Activated B cell treated with CpG ODN at 0.5 μM for 24 hours (primary cell): ENCODE measurements at regions of chr2 and their contacts with region 1.

Region 1: GRCh38 chr2:104872866-104873688 is 19.2 kb downstream of the POU3F3 start:
- DNase-seq: peak; percentile 50
- ATAC-seq: peak; percentile 89
- H3K4me3 Mint-ChIP-seq: peak overlapping the region; percentile 80
- H3K27ac Mint-ChIP-seq: no peak overlapping the region
- H3K4me1 Mint-ChIP-seq: peaks cover 21% of the 10 kb centered on the region
- H3K27me3 Mint-ChIP-seq: peaks cover 34% of the 10 kb centered on the region
- CTCF ChIP-seq: no peak

Region 2: GRCh38 chr2:102975996-102976975 is 1896.8 kb before region 1 on chr2:
- CTCF ChIA-PET with region 1: no interaction called
- POLR2A ChIA-PET with region 1: no interaction called
- intact Hi-C with region 1: loop called (anchors 2 kb)
- DNase-seq: no peak
- ATAC-seq: no peak
- H3K4me3 Mint-ChIP-seq: no peak overlapping the region
- H3K27ac Mint-ChIP-seq: no peak overlapping the region
- H3K4me1 Mint-ChIP-seq: no peaks in the 10 kb centered on the region
- H3K27me3 Mint-ChIP-seq: peaks cover 3% of the 10 kb centered on the region
- CTCF ChIP-seq: no peak

Region 3: DNA sequence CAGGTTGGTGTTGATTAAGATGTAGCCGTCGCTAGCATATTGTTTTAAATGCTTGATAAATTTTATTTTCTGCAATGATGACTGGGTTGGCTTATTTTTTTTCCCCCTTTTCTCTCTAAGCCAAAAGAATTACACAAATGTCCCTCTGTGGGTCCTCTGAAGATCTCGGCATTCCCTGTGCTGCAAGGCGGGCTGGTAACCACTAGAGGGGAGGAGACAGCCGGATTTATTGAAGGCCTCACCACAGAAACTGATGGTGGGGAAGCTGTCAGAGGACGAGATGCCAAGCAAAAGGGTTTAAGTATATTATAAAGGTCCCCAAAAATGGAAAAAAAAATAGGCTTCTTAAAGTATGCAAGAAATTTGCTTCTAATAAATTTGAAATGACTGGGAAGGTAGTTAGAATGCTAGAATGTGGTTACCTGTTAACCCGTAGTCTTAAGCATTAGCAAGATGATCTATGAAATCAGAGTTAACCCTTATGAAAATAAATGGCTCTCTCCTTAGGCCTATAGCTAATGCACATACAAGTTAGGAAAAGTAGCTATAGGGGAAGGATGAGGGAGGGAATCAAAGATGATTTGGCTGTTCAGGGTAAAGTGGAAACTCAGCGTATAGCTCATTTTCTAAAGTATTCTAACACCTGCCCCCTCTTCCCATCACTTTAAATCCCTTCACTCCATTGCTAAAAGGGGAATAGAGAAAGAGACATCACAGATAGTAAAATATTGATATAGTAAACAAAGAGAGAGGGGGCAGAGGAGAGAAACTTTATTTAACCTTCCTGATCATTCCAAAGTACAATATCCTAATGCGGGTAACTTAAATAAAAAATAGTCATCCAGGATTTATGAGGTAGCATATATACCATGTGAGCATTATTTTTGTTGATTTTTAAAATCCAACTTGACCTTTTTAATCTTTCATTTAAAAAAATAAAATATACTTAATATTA is 913.6 kb before region 1 on chr2:
- CTCF ChIA-PET with region 1: no interaction called
- POLR2A ChIA-PET with region 1: no interaction called
- intact Hi-C with region 1: loop called (anchors 10 kb)
- DNase-seq: no peak
- ATAC-seq: no peak
- H3K4me3 Mint-ChIP-seq: no peak overlapping the region
- H3K27ac Mint-ChIP-seq: no peak overlapping the region
- H3K4me1 Mint-ChIP-seq: no peaks in the 10 kb centered on the region
- H3K27me3 Mint-ChIP-seq: no peaks in the 10 kb centered on the region
- CTCF ChIP-seq: peak; percentile 18

Region 4: DNA sequence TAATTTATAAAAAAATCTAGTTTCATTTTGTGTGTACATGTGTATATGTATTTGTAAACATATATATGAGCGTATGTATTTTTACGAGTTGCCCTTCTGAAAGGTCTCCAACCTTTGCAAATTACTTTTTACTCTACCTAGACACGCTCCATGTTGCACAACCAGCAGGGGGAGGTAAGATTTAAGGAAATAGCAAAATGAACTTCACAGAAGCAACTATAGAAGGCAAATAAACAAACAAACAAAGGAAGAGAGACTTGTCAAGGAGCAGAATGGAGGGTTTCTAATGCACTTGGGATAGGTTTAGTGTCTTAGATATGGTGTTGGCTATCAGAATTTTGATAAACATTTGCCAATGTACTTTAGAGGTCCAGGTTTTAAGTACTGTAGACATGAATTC is 839.7 kb before region 1 on chr2:
- CTCF ChIA-PET with region 1: no interaction called
- POLR2A ChIA-PET with region 1: no interaction called
- intact Hi-C with region 1: loop called (anchors 5 kb)
- DNase-seq: no peak
- ATAC-seq: no peak
- H3K4me3 Mint-ChIP-seq: no peak overlapping the region
- H3K27ac Mint-ChIP-seq: no peak overlapping the region
- H3K4me1 Mint-ChIP-seq: no peaks in the 10 kb centered on the region
- H3K27me3 Mint-ChIP-seq: no peaks in the 10 kb centered on the region
- CTCF ChIP-seq: no peak

Region 5: DNA sequence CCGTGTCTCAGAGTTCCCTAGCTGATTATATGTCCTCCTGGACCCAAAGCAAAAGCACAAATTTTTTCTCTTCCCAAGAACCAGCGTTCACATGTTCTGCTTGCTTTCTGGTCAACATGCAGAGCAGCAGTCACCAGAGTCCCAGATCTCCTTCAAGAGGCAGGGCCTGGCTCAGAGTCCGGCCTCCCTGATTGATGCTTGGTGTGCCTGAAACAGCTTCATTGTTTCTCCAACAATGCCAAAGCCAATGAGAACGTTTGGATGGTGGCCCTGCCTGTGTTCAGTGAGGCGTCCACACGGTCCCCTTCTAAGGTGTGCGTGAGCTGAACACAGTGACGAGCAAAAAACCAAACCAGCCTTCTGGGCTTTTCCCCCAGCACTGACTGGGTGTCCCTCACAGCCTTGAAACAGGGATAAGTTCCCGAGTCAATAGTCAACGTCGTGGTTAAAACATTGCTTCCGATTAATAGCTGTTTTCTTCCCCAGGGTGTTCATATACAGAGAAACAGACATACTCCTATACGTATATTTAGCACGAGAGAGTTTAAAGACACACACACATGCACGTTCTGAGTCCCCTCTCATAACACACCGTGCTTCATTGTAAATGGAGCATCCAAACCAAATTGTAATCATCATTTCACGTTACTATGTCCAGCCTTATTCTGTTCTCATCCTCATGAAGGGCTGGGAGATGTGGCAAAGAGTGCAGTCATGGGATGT is 38.5 kb before region 1 on chr2:
- CTCF ChIA-PET with region 1: no interaction called
- POLR2A ChIA-PET with region 1: no interaction called
- intact Hi-C with region 1: no loop called
- DNase-seq: no peak
- ATAC-seq: no peak
- H3K4me3 Mint-ChIP-seq: no peak overlapping the region
- H3K27ac Mint-ChIP-seq: no peak overlapping the region
- H3K4me1 Mint-ChIP-seq: no peaks in the 10 kb centered on the region
- H3K27me3 Mint-ChIP-seq: peaks cover 23% of the 10 kb centered on the region
- CTCF ChIP-seq: no peak

Region 6: GRCh38 chr2:104849618-104850141 is 23.4 kb before region 1 on chr2:
- CTCF ChIA-PET with region 1: interaction called, 3 read pairs
- POLR2A ChIA-PET with region 1: no interaction called
- intact Hi-C with region 1: loop called (anchors 2 kb)
- DNase-seq: no peak
- ATAC-seq: no peak
- H3K4me3 Mint-ChIP-seq: no peak overlapping the region
- H3K27ac Mint-ChIP-seq: peak overlapping the region; percentile 14
- H3K4me1 Mint-ChIP-seq: peaks cover 30% of the 10 kb centered on the region
- H3K27me3 Mint-ChIP-seq: peaks cover 84% of the 10 kb centered on the region
- CTCF ChIP-seq: no peak

Region 7: GRCh38 chr2:104938231-104938941 is 65.3 kb after region 1 on chr2:
- CTCF ChIA-PET with region 1: interaction called, 4 read pairs
- POLR2A ChIA-PET with region 1: interaction called, 3 read pairs
- intact Hi-C with region 1: loop called (anchors 2 kb)
- DNase-seq: peak; percentile 26
- ATAC-seq: peak; percentile 94
- H3K4me3 Mint-ChIP-seq: peak overlapping the region; percentile 72
- H3K27ac Mint-ChIP-seq: peak overlapping the region; percentile 68
- H3K4me1 Mint-ChIP-seq: peaks cover 35% of the 10 kb centered on the region
- H3K27me3 Mint-ChIP-seq: no peaks in the 10 kb centered on the region
- CTCF ChIP-seq: no peak

Region 8: GRCh38 chr2:105042189-105042588 is 169.1 kb after region 1 on chr2:
- CTCF ChIA-PET with region 1: no interaction called
- POLR2A ChIA-PET with region 1: no interaction called
- intact Hi-C with region 1: no loop called
- DNase-seq: no peak
- ATAC-seq: no peak
- H3K4me3 Mint-ChIP-seq: no peak overlapping the region
- H3K27ac Mint-ChIP-seq: no peak overlapping the region
- H3K4me1 Mint-ChIP-seq: peaks cover 28% of the 10 kb centered on the region
- H3K27me3 Mint-ChIP-seq: no peaks in the 10 kb centered on the region
- CTCF ChIP-seq: no peak